ENCODE measurements at regions of chr11 and their contacts with region 1.

Region 1: GRCh38 chr11:8688414-8689362 is 6.1 kb downstream of the RPL27A start:
- DNase-seq: peak; percentile 84
- ATAC-seq: peak; percentile 90
- H3K4me3 Mint-ChIP-seq: peak overlapping the region; percentile 97
- H3K27ac Mint-ChIP-seq: peak overlapping the region; percentile 95
- H3K4me1 Mint-ChIP-seq: peaks cover 49% of the 10 kb centered on the region
- H3K27me3 Mint-ChIP-seq: no peaks in the 10 kb centered on the region
- CTCF ChIP-seq: no peak

Region 2: GRCh38 chr11:8558436-8558835 is 130.3 kb before region 1 on chr11:
- CTCF ChIA-PET with region 1: no interaction called
- POLR2A ChIA-PET with region 1: no interaction called
- intact Hi-C with region 1: no loop called
- DNase-seq: no peak
- ATAC-seq: no peak
- H3K4me3 Mint-ChIP-seq: no peak overlapping the region
- H3K27ac Mint-ChIP-seq: no peak overlapping the region
- H3K4me1 Mint-ChIP-seq: no peaks in the 10 kb centered on the region
- H3K27me3 Mint-ChIP-seq: no peaks in the 10 kb centered on the region
- CTCF ChIP-seq: no peak

Region 3: DNA sequence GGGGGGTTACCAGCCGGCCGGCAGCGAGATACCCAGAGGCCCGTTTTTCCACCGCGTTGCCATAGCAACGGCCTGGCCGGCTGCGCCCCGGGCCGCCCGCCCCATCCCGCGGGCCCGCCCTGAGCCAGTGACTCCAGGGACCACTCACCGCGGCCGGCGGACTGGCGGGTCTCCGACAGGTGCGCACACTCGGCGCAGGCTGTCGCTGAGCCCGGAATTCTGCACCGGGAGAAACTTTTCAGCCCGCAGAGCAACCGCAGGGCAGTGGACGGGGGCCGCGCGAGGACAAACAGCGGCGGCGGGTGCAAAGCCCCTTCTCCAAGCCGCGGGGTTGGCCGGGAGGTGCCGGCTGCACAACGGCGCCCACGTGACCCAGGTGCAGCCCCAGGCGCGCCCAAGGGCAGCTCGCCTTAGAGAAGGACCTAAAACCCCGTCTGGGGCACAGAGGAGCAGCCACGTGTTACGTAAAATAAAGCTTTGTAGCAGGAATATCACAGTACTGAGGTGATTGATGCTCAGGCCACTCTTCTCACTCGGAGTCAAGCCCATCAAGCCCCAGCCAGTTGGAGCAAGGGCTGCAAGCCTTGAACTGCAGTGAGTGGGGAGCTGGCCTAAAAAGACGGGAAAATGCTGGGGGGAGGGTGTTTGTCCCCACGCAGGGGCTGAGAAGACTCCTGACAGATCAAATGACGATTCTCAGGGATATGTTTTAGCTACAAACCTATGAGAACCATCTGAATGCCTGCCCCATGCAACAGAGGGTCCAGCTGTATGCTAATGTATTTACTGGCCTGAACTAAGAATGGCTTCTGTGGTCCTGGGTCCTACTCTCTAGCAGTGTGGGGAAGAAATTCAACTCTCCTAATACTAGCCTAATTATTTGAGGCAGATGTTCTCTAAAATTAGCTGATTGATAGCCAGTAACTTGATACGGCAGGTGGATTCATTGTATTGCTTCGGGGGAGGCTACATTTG is 94.5 kb before region 1 on chr11 and contains the start of gene STK33:
- CTCF ChIA-PET with region 1: no interaction called
- POLR2A ChIA-PET with region 1: interaction called, 3 read pairs
- intact Hi-C with region 1: loop called (anchors 10 kb)
- DNase-seq: peak; percentile 52
- ATAC-seq: peak; percentile 92
- H3K4me3 Mint-ChIP-seq: peak within 1 kb of the TSS; percentile 88
- H3K27ac Mint-ChIP-seq: peak within 1 kb of the TSS; percentile 50
- H3K4me1 Mint-ChIP-seq: peaks cover 17% of the 10 kb centered on the region
- H3K27me3 Mint-ChIP-seq: peaks cover 11% of the 10 kb centered on the region
- CTCF ChIP-seq: no peak
- total RNA-seq, gene STK33: 11.4 and 14.0 TPM in 2 replicates

Region 4: DNA sequence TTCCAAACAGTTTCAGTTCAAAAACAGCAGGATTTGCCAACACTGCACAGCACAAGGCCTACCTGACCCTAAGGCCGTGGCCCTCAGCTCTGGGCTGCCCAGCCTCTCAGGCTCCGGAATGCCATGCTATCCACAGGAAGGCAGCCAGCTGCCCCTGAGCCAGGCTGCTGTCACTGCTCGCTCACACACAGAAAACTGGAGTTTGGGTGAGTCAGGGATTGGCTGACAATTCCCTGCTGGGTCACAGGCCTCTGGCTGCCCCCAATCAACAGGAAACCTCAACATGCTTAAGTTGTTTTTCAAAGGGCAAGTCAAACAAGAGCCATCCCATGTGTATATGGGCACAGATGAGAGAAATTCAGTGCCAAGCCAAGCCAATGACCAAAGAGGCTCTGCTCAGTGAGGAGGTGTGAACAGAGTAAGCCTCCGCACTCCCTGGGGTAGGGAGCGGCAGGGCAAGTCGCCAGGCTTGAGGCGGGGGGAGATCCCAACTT is 44.1 kb after region 1 on chr11:
- CTCF ChIA-PET with region 1: no interaction called
- POLR2A ChIA-PET with region 1: interaction called, 24 read pairs
- intact Hi-C with region 1: loop called (anchors 2 kb)
- DNase-seq: no peak
- ATAC-seq: peak; percentile 18
- H3K4me3 Mint-ChIP-seq: peak overlapping the region; percentile 69
- H3K27ac Mint-ChIP-seq: peak overlapping the region; percentile 90
- H3K4me1 Mint-ChIP-seq: peaks cover 34% of the 10 kb centered on the region
- H3K27me3 Mint-ChIP-seq: no peaks in the 10 kb centered on the region
- CTCF ChIP-seq: no peak

Region 5: GRCh38 chr11:8813658-8814057 is 125.0 kb after region 1 on chr11:
- CTCF ChIA-PET with region 1: interaction called, 4 read pairs
- POLR2A ChIA-PET with region 1: interaction called, 11 read pairs
- intact Hi-C with region 1: loop called (anchors 2 kb)
- DNase-seq: peak; percentile 29
- ATAC-seq: peak; percentile 77
- H3K4me3 Mint-ChIP-seq: no peak overlapping the region
- H3K27ac Mint-ChIP-seq: no peak overlapping the region
- H3K4me1 Mint-ChIP-seq: peaks cover 10% of the 10 kb centered on the region
- H3K27me3 Mint-ChIP-seq: peaks cover 10% of the 10 kb centered on the region
- CTCF ChIP-seq: peak; percentile 23

Region 6: DNA sequence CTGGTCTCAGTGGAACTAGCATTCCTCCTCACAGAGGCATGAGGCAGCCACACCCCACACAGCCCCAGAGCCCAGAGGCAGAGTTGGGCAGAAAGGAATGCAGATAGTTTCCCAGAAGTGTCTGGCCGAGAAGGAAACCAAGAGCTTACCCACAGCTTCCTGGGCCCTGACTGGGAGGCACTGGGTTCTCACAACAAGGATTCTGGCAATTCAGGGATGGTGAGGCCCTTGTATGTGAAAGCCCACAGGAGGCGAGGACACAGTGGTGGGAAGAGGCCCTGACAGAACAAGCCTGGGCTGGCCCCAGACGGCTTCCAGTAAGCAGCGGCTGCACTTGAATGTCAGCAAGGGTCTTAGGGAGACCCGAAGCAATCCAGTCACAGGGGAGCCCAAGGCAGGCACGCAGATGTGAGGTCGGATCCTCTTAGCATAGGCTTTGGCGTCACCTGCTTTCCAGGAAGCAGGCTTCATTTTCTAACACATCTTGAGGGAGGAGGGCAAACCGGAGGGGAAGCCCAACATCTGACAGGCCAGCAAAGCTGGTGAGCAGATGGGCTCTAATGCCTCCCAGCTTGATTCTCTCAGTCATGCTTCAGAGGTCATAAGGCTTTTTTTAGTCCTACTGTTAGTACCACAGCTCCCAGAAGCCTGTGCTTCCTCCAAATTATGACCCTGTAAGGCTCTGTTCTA is 144.0 kb after region 1 on chr11:
- CTCF ChIA-PET with region 1: no interaction called
- POLR2A ChIA-PET with region 1: interaction called, 7 read pairs
- intact Hi-C with region 1: loop called (anchors 1 kb)
- DNase-seq: peak; percentile 22
- ATAC-seq: peak; percentile 96
- H3K4me3 Mint-ChIP-seq: no peak overlapping the region
- H3K27ac Mint-ChIP-seq: peak overlapping the region; percentile 74
- H3K4me1 Mint-ChIP-seq: peaks cover 16% of the 10 kb centered on the region
- H3K27me3 Mint-ChIP-seq: no peaks in the 10 kb centered on the region
- CTCF ChIP-seq: no peak

Region 7: DNA sequence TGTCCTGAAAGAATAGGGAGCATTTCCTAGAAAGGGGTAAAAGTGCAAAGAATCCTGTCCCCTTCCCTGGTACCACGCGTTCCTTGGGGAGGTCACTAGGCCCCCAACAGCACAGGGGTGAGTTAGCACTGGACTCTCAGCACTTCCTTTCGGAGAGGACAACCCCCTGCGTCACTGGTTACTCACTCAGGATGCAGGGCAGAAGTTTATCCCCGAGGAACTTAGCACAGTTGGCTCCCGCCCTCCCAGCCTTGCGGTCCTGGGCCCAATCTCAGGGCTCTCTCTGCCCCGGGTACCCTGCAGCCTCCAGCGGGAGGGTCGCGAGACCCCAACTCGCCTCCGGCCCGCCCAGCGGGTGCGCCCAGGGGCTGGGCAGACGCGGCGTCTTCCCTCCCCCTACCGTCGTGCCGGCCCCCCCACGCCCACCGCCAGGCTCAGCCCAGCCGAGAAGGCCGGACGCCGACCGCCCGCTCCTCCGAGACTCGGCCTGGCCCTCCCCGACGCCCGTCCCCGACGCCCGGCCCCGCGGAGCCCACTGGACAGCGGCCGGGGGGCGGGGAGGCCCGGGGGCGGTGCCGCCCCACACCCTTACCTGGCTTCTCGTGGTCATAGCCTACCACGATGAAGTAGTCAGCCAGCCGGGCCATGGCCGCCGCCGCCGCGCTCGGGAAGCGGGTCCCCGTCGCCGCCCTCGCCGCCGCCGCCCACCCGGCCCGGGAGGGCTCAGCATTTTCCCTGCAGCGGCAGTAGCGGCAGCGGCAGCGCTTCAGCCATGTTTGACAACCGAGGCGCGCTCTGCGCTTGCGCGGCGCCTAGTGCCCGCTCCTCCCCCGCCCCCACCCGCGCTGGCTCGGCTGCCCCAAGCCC is 1605.0 kb after region 1 on chr11 and contains the start of gene SBF2:
- CTCF ChIA-PET with region 1: no interaction called
- POLR2A ChIA-PET with region 1: no interaction called
- intact Hi-C with region 1: loop called (anchors 10 kb)
- DNase-seq: peak; percentile 78
- ATAC-seq: peak; percentile 66
- H3K4me3 Mint-ChIP-seq: peak within 1 kb of the TSS; percentile 81
- H3K27ac Mint-ChIP-seq: no peak within 1 kb of the TSS
- H3K4me1 Mint-ChIP-seq: peaks cover 27% of the 10 kb centered on the region
- H3K27me3 Mint-ChIP-seq: peaks cover 29% of the 10 kb centered on the region
- CTCF ChIP-seq: no peak
- total RNA-seq, gene SBF2: 7.9 and 12.0 TPM in 2 replicates